Activated CD4-positive, alpha-beta memory T cell treated with anti-CD3 and anti-CD28 coated beads for 36 hours (primary cell): ENCODE measurements at regions of chr18 and their contacts with region 1.

Region 1: DNA sequence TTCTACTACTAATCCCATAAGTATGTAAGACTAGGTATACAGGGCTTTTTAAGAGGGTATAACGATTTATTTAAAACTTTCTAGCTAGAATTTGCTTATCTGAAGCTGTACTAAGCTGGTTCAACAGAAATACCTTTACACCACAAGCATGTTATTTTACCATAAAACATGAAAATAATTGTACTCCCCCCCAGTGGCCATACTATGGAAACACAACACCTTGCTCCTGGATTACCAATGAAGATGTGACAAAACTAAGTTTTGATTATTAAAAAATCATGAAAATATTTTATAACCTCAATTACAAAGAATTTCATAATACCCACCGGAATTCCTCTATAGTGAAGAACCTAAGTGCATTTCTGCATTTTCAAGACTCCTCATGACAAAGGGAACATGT is 27.3 kb downstream of the LPIN2 start:
- DNase-seq: no peak
- H3K4me3 Mint-ChIP-seq: no peak overlapping the region
- H3K27ac Mint-ChIP-seq: peak overlapping the region; percentile 58
- H3K4me1 Mint-ChIP-seq: peaks cover 74% of the 10 kb centered on the region
- H3K27me3 Mint-ChIP-seq: no peaks in the 10 kb centered on the region

Region 2: DNA sequence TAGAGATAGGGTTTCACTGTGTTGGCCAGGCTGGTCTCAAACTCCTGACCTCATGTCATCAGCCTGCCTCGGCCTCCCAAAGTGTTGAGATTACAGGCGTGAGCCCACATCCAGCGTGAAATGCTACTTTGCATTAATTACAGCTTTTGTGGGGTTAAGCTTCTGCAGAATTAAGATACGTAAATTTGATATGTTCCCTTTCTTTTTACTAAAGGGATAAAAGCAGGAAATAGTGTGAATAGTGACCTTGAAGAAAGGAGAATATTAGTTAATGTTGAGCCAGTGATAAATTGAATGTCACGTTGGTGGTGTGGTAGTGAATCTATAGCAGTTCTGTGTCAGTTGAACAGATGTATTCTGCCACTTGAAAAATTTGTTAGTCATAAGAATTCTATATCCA is 313.2 kb before region 1 on chr18:
- CTCF ChIA-PET with region 1: no interaction called
- POLR2A ChIA-PET with region 1: no interaction called
- intact Hi-C with region 1: no loop called
- DNase-seq: no peak
- H3K4me3 Mint-ChIP-seq: no peak overlapping the region
- H3K27ac Mint-ChIP-seq: no peak overlapping the region
- H3K4me1 Mint-ChIP-seq: peaks cover 59% of the 10 kb centered on the region
- H3K27me3 Mint-ChIP-seq: no peaks in the 10 kb centered on the region

Region 3: GRCh38 chr18:2932247-2933181 is 53.1 kb before region 1 on chr18:
- CTCF ChIA-PET with region 1: interaction called, 185 read pairs
- POLR2A ChIA-PET with region 1: interaction called, 8 read pairs
- intact Hi-C with region 1: loop called (anchors 1 kb)
- DNase-seq: no peak
- H3K4me3 Mint-ChIP-seq: peak overlapping the region; percentile 18
- H3K27ac Mint-ChIP-seq: peak overlapping the region; percentile 89
- H3K4me1 Mint-ChIP-seq: peaks cover 45% of the 10 kb centered on the region
- H3K27me3 Mint-ChIP-seq: no peaks in the 10 kb centered on the region

Region 4: GRCh38 chr18:2948038-2948437 is 37.6 kb before region 1 on chr18:
- CTCF ChIA-PET with region 1: interaction called, 24 read pairs
- POLR2A ChIA-PET with region 1: no interaction called
- intact Hi-C with region 1: no loop called
- DNase-seq: no peak
- H3K4me3 Mint-ChIP-seq: no peak overlapping the region
- H3K27ac Mint-ChIP-seq: no peak overlapping the region
- H3K4me1 Mint-ChIP-seq: peaks cover 54% of the 10 kb centered on the region
- H3K27me3 Mint-ChIP-seq: no peaks in the 10 kb centered on the region

Region 5: DNA sequence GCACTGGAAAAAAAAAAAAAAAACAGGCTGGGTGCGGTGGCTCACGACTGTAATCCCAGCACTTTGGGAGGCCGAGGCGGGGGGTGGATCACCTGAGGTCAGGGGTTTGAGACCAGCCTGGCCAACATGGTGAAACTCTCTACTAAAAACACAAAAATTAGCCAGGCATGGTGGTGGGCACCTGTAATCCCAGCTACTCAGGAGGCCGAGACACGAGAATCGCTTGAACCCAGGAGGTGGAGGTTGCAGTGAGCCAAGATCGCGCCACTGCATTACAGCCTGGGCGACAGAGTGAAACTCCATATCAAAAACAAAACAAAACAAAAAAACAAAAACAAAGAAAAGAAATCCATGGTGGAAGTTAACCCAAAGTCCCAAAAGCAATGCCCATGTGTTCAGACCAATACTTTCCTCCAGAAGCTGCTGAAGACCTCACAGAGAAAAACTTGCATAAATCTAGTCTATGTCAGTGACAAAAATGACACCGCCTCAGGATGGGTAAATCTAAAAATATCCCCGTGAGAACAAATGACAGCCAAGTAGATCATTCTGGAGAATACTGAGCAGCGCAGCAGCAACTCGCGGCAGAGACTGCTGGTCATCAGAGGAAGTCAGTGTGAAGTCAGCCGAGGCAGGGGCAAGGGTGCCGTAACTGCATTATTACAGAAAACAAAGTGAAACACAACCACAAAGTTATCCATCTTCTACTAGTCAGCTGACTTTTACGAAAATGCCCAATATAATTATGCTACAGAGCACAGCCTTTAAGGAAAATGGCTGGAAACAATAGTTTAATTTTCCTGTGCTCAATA is 13.7 kb before region 1 on chr18:
- CTCF ChIA-PET with region 1: interaction called, 36 read pairs
- POLR2A ChIA-PET with region 1: interaction called, 74 read pairs
- intact Hi-C with region 1: loop called (anchors 1 kb)
- DNase-seq: peak; percentile 87
- H3K4me3 Mint-ChIP-seq: peak overlapping the region; percentile 79
- H3K27ac Mint-ChIP-seq: peak overlapping the region; percentile 100
- H3K4me1 Mint-ChIP-seq: peaks cover 92% of the 10 kb centered on the region
- H3K27me3 Mint-ChIP-seq: no peaks in the 10 kb centered on the region

Region 6: DNA sequence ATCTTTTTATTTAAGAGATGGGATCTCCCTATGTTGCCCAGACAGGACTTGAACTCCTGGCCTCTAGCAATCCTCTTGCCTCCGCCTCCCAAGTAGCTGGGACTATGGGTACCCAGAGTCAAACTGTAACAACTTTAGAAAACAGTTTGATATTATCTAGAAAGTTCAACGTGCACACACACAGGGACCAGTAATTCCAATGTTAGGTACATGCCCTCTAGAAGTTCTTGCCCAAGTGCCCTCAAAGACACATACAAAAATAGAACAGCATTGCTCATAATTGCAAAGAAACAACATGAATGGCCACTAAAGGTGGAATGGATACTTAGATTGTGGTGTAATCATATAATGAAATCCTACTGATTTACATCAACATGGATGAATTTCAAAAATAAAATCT is 39.9 kb after region 1 on chr18:
- CTCF ChIA-PET with region 1: no interaction called
- POLR2A ChIA-PET with region 1: no interaction called
- intact Hi-C with region 1: no loop called
- DNase-seq: no peak
- H3K4me3 Mint-ChIP-seq: no peak overlapping the region
- H3K27ac Mint-ChIP-seq: no peak overlapping the region
- H3K4me1 Mint-ChIP-seq: no peaks in the 10 kb centered on the region
- H3K27me3 Mint-ChIP-seq: no peaks in the 10 kb centered on the region

Region 7: DNA sequence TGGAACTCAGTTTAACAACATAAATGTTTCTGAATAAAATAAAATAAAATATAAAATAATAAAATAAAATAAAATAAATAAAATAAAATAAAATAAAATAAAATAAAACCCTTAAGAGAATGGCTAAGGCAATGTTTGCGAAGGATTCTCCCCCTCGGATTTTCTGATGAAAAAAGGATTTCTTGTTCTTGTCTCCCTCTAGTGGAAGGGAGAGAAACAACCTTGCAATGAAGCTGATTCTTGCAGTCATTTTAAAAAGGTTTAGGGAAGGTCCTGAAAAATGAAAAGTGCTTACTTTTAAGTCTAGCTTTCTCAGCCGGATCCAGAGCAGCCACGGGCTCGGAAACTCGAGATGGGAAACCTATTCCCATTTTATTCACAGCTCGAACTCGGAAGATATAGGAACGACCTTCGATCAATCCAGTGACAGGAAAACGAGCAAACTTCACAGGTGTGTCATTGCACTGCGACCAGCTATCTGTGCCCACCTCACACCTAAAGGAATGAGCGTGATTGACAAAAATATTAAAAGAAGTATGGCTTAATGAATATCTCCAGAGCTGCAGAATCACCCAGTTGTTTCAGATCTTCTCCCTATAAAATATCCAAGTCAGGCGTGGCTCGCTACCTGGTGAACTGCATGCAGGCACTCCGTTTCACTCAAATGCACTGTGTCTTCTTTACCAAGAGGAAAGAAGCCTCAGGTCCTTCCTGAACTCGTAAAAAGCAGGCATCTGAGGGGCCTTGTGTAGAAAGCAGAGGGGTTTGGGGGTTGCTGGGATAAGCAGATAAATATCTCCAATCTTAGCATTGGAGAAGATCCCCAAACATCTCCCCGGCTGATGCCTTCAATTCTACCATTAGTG is 166.0 kb after region 1 on chr18:
- CTCF ChIA-PET with region 1: interaction called, 11 read pairs
- POLR2A ChIA-PET with region 1: no interaction called
- intact Hi-C with region 1: no loop called
- DNase-seq: no peak
- H3K4me3 Mint-ChIP-seq: no peak overlapping the region
- H3K27ac Mint-ChIP-seq: no peak overlapping the region
- H3K4me1 Mint-ChIP-seq: peaks cover 6% of the 10 kb centered on the region
- H3K27me3 Mint-ChIP-seq: no peaks in the 10 kb centered on the region